Ovary (tissue), 10 donors: ENCODE measurements at regions of chr16 and their contacts with region 1.

Region 1: DNA sequence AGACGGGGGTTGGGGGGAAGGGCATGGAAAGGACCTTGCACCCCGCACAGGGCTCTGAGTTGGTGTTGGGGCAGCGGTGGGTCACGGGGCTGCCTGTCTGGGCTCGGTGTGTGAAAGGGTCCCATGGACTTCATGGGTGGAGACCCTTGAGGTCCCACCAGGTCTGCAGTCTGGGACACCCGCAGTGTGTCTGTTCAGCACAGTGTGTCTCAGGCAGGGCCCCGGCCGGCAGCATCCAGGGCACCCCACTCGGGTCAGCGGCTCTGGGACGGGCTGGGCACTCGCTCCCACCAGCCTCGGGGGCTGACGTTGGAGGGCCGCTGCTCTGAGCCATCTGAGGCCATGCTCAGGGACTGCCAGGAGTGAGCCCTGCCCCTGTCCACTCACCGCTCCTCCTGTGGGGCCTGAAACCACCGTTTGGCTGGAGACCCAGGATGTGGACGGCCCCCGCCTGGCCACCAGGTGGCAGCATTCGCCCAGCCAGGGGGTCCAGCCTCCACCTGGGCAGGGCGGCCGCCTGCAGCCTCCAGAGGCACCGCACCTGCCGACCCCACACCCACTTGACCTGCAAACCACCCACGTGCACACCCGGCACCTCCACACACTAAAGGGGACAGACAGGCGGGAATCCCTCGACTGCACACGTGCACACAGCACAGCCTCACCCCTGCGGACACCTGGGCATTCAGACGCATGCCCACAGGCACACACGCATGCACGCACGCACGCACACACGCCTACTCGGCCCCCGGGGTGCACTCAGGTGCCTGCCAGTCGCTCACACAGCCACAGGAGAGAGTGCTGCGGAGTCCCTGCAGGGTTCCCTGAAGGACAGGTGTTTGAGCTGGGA is 10.1 kb upstream of the ZFPM1 start:
- DNase-seq: peak; percentile 71 to 87 (median 83)
- H3K4me3 ChIP-seq: no peak overlapping the region
- H3K27ac ChIP-seq: no peak overlapping the region
- H3K4me1 ChIP-seq: peaks cover 2% of the 10 kb centered on the region
- H3K27me3 ChIP-seq: no peaks in the 10 kb centered on the region
- CTCF ChIP-seq: peak; percentile 95 to 97 (median 97)
- EP300 ChIP-seq: no peak
- POLR2A ChIP-seq: no peak

Region 2: DNA sequence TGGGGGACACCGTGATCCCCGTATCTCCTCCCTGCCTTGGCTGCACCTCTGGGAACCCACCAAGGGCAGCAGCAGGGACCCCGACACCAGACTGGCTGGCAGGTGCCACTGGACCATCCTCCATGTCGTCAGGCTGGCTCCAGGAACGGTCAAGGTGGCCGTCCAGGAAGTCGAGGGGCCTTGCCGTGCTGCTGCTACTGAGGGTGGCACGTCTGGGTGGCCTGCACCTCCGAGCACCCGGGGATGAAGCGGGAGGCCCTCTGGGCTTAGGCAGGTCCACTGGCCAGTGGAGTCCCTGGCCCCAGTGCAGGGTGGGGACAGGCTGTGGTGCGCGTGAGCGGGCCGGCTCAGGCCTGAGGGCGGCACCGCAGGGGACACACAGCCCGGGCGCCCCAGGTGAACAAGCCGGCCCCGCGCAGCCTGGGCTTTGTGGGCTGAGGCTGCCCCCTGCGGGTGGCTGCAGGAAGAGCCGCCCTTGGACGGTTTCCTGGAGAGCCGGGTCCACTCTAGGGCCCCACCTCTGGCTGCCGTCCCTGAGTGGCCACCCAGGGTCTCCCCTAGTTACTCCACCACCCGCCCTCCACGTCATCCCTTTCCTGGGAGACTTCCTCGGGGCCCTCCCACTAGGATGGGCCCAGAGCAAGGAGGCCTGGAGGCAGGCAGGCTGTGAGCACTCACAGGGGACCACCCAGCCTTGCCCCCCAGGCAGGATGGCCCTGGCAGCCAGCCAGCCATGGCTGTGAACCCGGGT is 84.4 kb after region 1 on chr16:
- intact Hi-C with region 1: loop called (anchors 2 to 5 kb)
- DNase-seq: peak; percentile 83 to 89 (median 87)
- H3K4me3 ChIP-seq: no peak overlapping the region
- H3K27ac ChIP-seq: peak overlapping the region; percentile 5 to 11
- H3K4me1 ChIP-seq: peaks cover 19% of the 10 kb centered on the region
- H3K27me3 ChIP-seq: no peaks in the 10 kb centered on the region
- CTCF ChIP-seq: peak; percentile 87 to 93 (median 91)
- EP300 ChIP-seq: no peak
- POLR2A ChIP-seq: no peak

Region 3: GRCh38 chr16:88561485-88562369 is 118.8 kb after region 1 on chr16:
- intact Hi-C with region 1: loop called (anchors 1 to 10 kb)
- DNase-seq: peak in 4 of 5 donors; percentile 51 to 60 (median 56)
- H3K4me3 ChIP-seq: peak overlapping the region; percentile 17
- H3K27ac ChIP-seq: no peak overlapping the region
- H3K4me1 ChIP-seq: peaks cover 2% of the 10 kb centered on the region
- H3K27me3 ChIP-seq: no peaks in the 10 kb centered on the region
- CTCF ChIP-seq: peak in 2 of 3 donors; percentile 38 to 46
- EP300 ChIP-seq: no peak
- POLR2A ChIP-seq: no peak

Region 4: GRCh38 chr16:88569985-88570690 is 127.2 kb after region 1 on chr16 and contains the start of gene ZC3H18:
- intact Hi-C with region 1: loop called in 1 of 4 experiments (anchors 10 kb)
- DNase-seq: peak; percentile 96 to 99 (median 97)
- H3K4me3 ChIP-seq: peak within 1 kb of the TSS; percentile 73
- H3K27ac ChIP-seq: peak within 1 kb of the TSS; percentile 26 to 39
- H3K4me1 ChIP-seq: peaks cover 7% of the 10 kb centered on the region
- H3K27me3 ChIP-seq: no peaks in the 10 kb centered on the region
- CTCF ChIP-seq: no peak
- EP300 ChIP-seq: no peak
- POLR2A ChIP-seq: peak; percentile 52
- total RNA-seq, gene ZC3H18: 16.0 to 40.4 (median 36.5) TPM

Region 5: DNA sequence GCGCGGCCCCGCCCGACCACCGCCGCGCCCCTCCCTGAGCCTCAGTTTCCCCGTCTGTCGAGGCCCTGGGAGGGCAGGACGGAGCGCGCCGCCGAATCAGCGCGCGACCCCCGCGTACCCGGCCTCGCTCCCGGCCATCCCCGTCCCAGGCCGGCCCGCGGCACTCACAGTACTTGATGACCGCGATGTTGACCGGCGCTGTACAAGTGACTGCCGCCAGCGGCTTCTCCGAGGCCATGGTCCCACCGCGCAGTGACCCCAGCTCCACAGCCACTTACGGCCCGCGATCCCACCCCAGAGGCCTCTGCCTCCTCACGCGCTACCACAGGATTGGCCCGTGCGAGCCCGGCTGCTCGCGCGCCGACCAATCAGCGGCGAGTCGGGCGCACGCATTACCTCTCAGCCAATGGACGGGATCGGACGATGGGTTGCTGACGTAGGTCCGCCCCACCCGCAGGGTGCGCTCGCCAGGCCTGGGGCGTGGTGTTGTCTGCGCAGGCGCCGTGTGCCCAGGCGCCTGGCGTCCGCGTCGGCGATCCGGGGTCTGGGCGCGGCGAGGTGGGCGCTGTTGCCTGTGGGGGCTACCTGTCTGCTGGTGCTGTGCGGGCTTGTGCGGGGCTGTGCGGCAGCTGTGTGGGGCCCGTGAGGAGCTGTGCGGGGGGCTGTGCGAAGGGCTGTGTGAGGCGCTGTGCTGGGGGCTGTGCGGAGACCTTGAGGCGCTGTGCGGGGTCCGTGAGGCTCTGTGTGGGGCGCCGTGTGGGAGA is 220.1 kb after region 1 on chr16 and contains the start of gene MVD:
- intact Hi-C with region 1: no loop called
- DNase-seq: peak; percentile 96 to 97 (median 96)
- H3K4me3 ChIP-seq: peak within 1 kb of the TSS; percentile 70
- H3K27ac ChIP-seq: peak within 1 kb of the TSS in 1 of 2 donors; percentile 35
- H3K4me1 ChIP-seq: peaks cover 3% of the 10 kb centered on the region
- H3K27me3 ChIP-seq: no peaks in the 10 kb centered on the region
- CTCF ChIP-seq: peak in 1 of 3 donors; percentile 31
- EP300 ChIP-seq: no peak
- POLR2A ChIP-seq: peak; percentile 63
- total RNA-seq, gene MVD: 9.1 to 135 (median 20.9) TPM